B cell (primary cell): ENCODE measurements at regions of chr9 and their contacts with region 1.

Region 1: GRCh38 chr9:22208846-22209585 is 199.9 kb upstream of the CDKN2B start:
- DNase-seq: no peak
- ATAC-seq: no peak
- H3K4me3 ChIP-seq: peak overlapping the region in 1 of 5 experiments; percentile 42
- H3K4me3 Mint-ChIP-seq: peak overlapping the region; percentile 72
- H3K27ac ChIP-seq: no peak overlapping the region
- H3K27ac Mint-ChIP-seq: peak overlapping the region; percentile 23
- H3K4me1 ChIP-seq: peaks cover 36 to 46% of the 10 kb centered on the region in 2 donors
- H3K4me1 Mint-ChIP-seq: peaks cover 42% of the 10 kb centered on the region
- H3K27me3 ChIP-seq: no peaks in the 10 kb centered on the region
- H3K27me3 Mint-ChIP-seq: no peaks in the 10 kb centered on the region
- CTCF ChIP-seq: no peak

Region 2: DNA sequence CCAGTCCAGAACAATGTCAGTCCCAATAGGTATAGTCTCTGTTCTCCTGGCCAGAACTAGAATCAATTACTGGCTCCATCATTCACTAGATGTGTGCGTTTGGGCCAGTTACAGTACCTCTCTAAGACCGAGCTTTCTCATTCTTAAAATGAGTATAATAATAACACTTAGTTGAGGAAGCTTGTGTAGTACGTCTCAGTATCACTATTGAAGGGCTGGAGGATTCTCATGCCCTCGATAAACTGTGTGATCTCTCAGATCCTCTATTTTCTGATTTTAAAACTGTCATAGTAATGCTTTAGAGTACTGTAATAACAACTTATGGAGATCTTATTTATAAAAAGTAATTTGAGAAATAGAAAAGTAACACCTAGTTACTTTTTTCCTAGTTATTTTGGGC is 265.6 kb before region 1 on chr9:
- CTCF ChIA-PET with region 1: no interaction called
- POLR2A ChIA-PET with region 1: no interaction called
- intact Hi-C with region 1: no loop called
- DNase-seq: no peak
- ATAC-seq: no peak
- H3K4me3 ChIP-seq: no peak overlapping the region
- H3K4me3 Mint-ChIP-seq: no peak overlapping the region
- H3K27ac ChIP-seq: no peak overlapping the region
- H3K27ac Mint-ChIP-seq: no peak overlapping the region
- H3K4me1 ChIP-seq: no peaks in the 10 kb centered on the region
- H3K4me1 Mint-ChIP-seq: no peaks in the 10 kb centered on the region
- H3K27me3 ChIP-seq: peaks cover 0 to 14% (median 3%) of the 10 kb centered on the region in 4 experiments
- H3K27me3 Mint-ChIP-seq: peaks cover 37% of the 10 kb centered on the region
- CTCF ChIP-seq: no peak

Region 3: DNA sequence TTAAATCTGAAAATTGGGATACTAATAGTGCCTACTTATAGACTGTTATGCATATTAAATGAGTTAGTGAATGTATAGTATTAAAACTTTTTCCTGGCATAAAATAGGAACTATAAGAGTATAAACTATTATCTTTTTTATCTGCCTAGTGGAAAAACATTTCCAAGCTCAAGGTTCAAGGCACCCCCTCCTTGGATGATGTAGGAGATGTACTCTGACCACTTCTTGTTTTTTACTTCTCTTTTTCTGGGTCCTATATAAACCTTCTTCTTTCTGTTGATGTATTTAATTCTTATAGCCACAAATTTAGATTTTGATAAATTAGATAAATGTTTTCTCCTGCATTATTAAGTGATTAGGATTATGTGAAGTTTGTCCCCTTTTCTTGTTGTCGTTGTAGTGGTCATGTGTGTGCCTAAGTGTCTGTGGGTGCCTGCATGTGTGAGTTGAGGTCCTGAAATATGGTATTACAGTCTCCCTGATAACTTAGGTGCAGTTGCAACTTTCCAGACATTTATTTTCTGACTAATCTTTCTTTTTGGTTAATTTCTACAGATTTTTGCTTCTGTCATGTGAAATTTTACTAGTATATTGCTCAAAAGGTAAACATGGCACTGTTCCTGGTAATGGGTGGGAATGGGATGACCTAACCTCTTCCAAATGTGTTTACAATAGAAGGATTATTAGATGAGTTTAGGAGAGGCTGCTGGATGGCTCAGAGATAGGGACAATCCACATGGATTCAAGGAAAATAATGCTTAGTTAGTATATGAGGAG is 39.1 kb before region 1 on chr9:
- CTCF ChIA-PET with region 1: no interaction called
- POLR2A ChIA-PET with region 1: no interaction called
- intact Hi-C with region 1: loop called (anchors 5 kb)
- DNase-seq: peak; percentile 40
- ATAC-seq: peak; percentile 39
- H3K4me3 ChIP-seq: peak overlapping the region in 1 of 5 experiments; percentile 5
- H3K4me3 Mint-ChIP-seq: peak overlapping the region; percentile 58
- H3K27ac ChIP-seq: peak overlapping the region; percentile 79 to 83
- H3K27ac Mint-ChIP-seq: peak overlapping the region; percentile 56
- H3K4me1 ChIP-seq: peaks cover 36 to 52% of the 10 kb centered on the region in 2 donors
- H3K4me1 Mint-ChIP-seq: peaks cover 56% of the 10 kb centered on the region
- H3K27me3 ChIP-seq: no peaks in the 10 kb centered on the region
- H3K27me3 Mint-ChIP-seq: no peaks in the 10 kb centered on the region
- CTCF ChIP-seq: no peak

Region 4: DNA sequence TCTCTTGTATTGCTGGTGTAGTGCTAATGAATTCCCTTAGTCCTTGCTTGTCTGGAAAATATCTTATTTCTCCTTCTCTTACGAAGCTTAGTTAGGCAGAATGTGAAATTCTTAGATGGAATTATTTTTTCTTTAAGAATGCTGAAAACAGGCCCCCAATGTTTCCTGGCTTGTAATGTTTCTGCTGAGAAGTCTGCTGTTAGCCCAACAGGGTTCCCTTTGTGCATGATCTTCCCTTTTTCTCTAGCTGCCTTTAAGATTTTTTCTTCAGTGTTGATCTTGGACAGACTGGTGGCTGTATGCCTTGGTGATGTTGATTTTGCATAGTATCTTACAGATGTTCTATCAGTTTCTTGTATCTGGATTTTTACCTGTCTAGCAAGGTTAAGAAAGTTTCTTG is 46.3 kb after region 1 on chr9:
- CTCF ChIA-PET with region 1: no interaction called
- POLR2A ChIA-PET with region 1: no interaction called
- intact Hi-C with region 1: no loop called
- DNase-seq: no peak
- ATAC-seq: no peak
- H3K4me3 ChIP-seq: no peak overlapping the region
- H3K4me3 Mint-ChIP-seq: no peak overlapping the region
- H3K27ac ChIP-seq: no peak overlapping the region
- H3K27ac Mint-ChIP-seq: no peak overlapping the region
- H3K4me1 ChIP-seq: no peaks in the 10 kb centered on the region
- H3K4me1 Mint-ChIP-seq: no peaks in the 10 kb centered on the region
- H3K27me3 ChIP-seq: peaks cover 0 to 8% (median 0%) of the 10 kb centered on the region in 4 experiments
- H3K27me3 Mint-ChIP-seq: peaks cover 45% of the 10 kb centered on the region
- CTCF ChIP-seq: no peak